Psoas muscle (tissue), 8 donors: ENCODE measurements at regions of chr18 and their contacts with region 1.

Region 1: GRCh38 chr18:26978812-26979341 is 113.4 kb upstream of the AQP4 start:
- DNase-seq: no peak
- ATAC-seq: no peak
- H3K4me3 ChIP-seq: no peak overlapping the region
- H3K27ac ChIP-seq: no peak overlapping the region
- H3K4me1 ChIP-seq: peaks cover 7% of the 10 kb centered on the region
- H3K27me3 ChIP-seq: no peaks in the 10 kb centered on the region
- CTCF ChIP-seq: no peak

Region 2: DNA sequence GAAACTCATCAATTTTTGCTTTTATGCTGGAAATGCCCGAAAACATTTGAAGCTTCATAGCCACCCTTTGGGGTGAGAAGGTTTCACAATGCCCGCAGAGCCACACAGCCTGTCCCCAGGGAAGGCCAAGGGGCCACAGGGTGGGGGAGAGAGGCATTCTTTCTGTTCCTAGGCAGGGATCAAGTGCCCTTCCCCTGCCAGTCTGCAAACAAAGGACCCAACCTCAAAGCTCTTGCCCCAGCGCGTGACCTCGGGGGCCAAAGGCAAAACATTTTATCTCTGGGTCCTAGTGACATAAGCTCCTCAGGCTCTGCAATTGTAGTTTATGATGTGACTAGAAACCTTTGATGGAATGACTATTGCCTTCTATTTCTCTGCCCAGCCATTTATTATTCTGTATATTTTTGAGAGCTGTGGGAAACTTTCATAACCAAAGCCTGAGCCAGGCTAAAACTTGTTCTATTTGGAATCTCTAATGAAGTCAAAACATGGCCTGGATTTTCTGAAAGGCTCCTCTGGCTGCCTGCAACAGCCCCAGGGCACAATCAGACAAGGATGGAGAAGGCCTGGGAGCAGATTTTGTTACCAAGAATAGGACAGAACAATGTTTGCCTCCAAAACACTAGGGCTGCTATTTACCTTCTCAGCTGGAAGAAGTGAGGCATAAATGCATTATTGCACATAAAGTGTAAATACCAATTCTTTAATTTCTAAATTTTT is 293.3 kb before region 1 on chr18:
- intact Hi-C with region 1: no loop called
- DNase-seq: no peak
- ATAC-seq: no peak
- H3K4me3 ChIP-seq: no peak overlapping the region
- H3K27ac ChIP-seq: no peak overlapping the region
- H3K4me1 ChIP-seq: no peaks in the 10 kb centered on the region
- H3K27me3 ChIP-seq: peaks cover 0 to 5% (median 3%) of the 10 kb centered on the region in 3 donors
- CTCF ChIP-seq: no peak

Region 3: DNA sequence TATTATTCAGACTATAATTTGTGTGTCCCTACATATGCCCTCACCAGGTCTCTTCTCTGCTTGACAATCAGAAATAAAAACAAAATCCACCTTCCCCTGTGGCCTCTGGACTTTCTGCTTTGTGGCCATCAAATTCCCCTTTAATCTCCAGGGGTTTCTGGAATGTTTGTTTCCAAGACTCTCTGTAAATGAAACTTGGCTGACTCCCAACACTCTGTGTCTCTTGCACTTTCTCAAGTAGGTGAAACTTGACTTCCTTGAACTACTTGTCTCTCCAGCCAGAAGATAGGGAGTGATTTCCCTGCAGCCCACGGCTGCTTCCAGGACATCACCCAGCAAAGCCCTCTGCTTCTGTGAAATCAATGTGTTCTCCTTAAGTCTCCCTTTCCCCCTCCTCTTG is 59.2 kb before region 1 on chr18:
- intact Hi-C with region 1: loop called in 1 of 2 experiments (anchors 10 kb)
- DNase-seq: no peak
- ATAC-seq: no peak
- H3K4me3 ChIP-seq: no peak overlapping the region
- H3K27ac ChIP-seq: no peak overlapping the region
- H3K4me1 ChIP-seq: no peaks in the 10 kb centered on the region
- H3K27me3 ChIP-seq: no peaks in the 10 kb centered on the region
- CTCF ChIP-seq: no peak